Transverse colon (tissue), 4 donors: ENCODE measurements at regions of chr9 and their contacts with region 1.

Region 1: DNA sequence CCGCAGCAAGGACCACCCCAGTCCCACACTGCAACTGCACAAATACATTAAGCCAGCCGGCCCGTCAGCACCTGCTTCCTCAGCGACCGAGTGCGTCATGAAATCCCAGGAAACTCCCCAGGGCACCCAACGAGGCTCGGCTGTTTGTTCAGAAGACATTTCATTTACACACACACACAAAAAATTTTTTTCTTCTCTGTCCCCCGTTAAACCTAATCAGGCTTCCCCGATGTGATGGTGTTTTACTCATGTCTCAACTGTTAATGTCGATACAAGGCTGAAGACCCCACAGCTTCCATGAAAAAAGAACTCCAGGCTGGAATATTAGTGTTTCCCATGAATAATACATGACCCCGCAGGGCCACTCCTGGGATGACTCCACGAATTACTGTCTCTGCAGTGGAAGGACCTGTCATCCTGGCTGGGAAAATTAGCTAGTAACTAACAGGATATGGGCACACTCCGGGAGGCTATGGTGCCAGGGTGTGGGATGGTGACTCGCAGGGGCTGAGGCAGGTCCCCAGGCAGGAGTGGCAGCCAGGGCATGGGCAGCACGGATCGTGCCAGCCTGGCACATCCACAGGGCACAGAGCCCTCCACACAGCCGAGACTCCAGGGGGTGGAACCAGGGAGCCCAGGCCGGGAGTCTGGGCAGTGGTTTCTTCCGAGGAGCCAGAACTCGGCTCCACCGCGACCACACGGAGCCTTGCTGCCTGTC is 102.4 kb downstream of the VAV2 start:
- DNase-seq: no peak
- H3K4me3 ChIP-seq: no peak overlapping the region
- H3K27ac ChIP-seq: no peak overlapping the region
- H3K4me1 ChIP-seq: peaks cover 0 to 12% (median 3%) of the 10 kb centered on the region in 4 donors
- H3K27me3 ChIP-seq: no peaks in the 10 kb centered on the region
- CTCF ChIP-seq: no peak
- EP300 ChIP-seq: no peak
- POLR2A ChIP-seq: no peak

Region 2: GRCh38 chr9:134049236-134049635 is 159.5 kb after region 1 on chr9:
- in situ Hi-C with region 1: no loop called
- intact Hi-C with region 1: no loop called
- DNase-seq: no peak
- H3K4me3 ChIP-seq: no peak overlapping the region
- H3K27ac ChIP-seq: no peak overlapping the region
- H3K4me1 ChIP-seq: peaks cover 0 to 13% (median 3%) of the 10 kb centered on the region in 4 donors
- H3K27me3 ChIP-seq: no peaks in the 10 kb centered on the region
- CTCF ChIP-seq: no peak
- EP300 ChIP-seq: no peak
- POLR2A ChIP-seq: no peak

Region 3: DNA sequence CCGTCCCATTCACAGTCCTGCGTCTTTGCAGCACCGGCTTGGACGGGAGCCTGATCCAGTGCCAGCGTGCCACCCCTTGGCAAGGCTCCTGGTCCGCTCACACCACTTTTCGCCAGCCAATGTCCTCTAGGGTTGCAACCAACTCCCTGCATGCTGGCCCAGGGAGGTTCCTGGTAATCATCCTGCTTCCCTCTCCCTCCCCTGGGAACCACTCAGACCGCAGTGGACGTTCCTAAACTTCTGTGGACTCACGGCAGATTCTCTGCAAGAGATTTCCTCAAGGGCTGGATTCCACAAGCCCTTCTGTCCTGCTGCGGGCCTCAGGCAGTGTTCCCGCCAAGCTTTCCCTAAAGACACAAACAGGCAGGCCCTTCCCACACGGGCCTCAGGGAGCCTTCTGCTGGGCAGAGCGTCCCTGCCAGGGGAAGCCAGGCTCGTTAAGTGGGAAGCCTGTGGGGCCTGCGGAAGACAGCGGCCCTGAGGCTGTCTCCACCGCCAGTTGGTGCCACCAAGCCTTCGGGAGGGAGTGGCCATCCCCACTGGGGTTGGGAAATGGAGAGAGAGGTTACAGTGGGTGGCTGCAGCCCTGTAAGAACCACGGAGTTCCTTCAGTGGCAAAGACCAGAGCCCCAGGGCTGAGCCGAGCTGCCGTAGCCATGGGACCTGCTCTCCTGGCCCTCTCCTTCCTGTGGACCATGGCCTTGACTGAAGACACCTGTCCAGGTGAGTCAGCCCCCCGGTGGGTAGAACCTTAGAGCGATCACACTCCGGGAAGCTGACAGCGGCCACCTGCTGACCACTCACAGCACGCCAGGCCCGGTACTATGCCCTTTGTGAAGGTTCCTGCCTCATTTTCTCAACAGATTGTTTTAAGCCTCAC is 974.4 kb after region 1 on chr9:
- in situ Hi-C with region 1: no loop called
- intact Hi-C with region 1: loop called (anchors 5 kb)
- DNase-seq: no peak
- H3K4me3 ChIP-seq: no peak overlapping the region
- H3K27ac ChIP-seq: no peak overlapping the region
- H3K4me1 ChIP-seq: no peaks in the 10 kb centered on the region
- H3K27me3 ChIP-seq: no peaks in the 10 kb centered on the region
- CTCF ChIP-seq: no peak
- EP300 ChIP-seq: no peak
- POLR2A ChIP-seq: no peak